Activated CD8-positive, alpha-beta memory T cell treated with anti-CD3 and anti-CD28 coated beads, Interleukin-2, amount 10 ng/mL, durations not matched to agents 7 days and 5 days (primary cell): ENCODE measurements at regions of chr15 and their contacts with region 1.

Region 1: GRCh38 chr15:48861813-48862431 is 16.0 kb upstream of the EID1 start:
- DNase-seq: peak; percentile 58
- ATAC-seq: peak; percentile 62
- H3K4me3 Mint-ChIP-seq: no peak overlapping the region
- H3K27ac Mint-ChIP-seq: no peak overlapping the region
- H3K4me1 Mint-ChIP-seq: peaks cover 29% of the 10 kb centered on the region
- H3K27me3 Mint-ChIP-seq: peaks cover 9% of the 10 kb centered on the region

Region 2: GRCh38 chr15:48695088-48695826 is 166.7 kb before region 1 on chr15:
- CTCF ChIA-PET with region 1: no interaction called
- DNase-seq: no peak
- ATAC-seq: no peak
- H3K4me3 Mint-ChIP-seq: no peak overlapping the region
- H3K27ac Mint-ChIP-seq: no peak overlapping the region
- H3K4me1 Mint-ChIP-seq: no peaks in the 10 kb centered on the region
- H3K27me3 Mint-ChIP-seq: no peaks in the 10 kb centered on the region

Region 3: GRCh38 chr15:48877630-48878595 is 16.0 kb after region 1 on chr15 and contains the start of gene EID1:
- CTCF ChIA-PET with region 1: interaction called, 17 read pairs
- DNase-seq: peak; percentile 97
- ATAC-seq: peak; percentile 93
- H3K4me3 Mint-ChIP-seq: peak within 1 kb of the TSS; percentile 93
- H3K27ac Mint-ChIP-seq: peak within 1 kb of the TSS; percentile 97
- H3K4me1 Mint-ChIP-seq: peaks cover 66% of the 10 kb centered on the region
- H3K27me3 Mint-ChIP-seq: peaks cover 8% of the 10 kb centered on the region
- total RNA-seq, gene EID1: 100 to 133 TPM

Region 4: GRCh38 chr15:48963524-48964113 is 101.7 kb after region 1 on chr15 and contains the start of gene SHC4:
- CTCF ChIA-PET with region 1: interaction called, 86 read pairs
- DNase-seq: peak; percentile 46
- ATAC-seq: peak; percentile 59
- H3K4me3 Mint-ChIP-seq: peak within 1 kb of the TSS; percentile 81
- H3K27ac Mint-ChIP-seq: peak within 1 kb of the TSS; percentile 86
- H3K4me1 Mint-ChIP-seq: peaks cover 56% of the 10 kb centered on the region
- H3K27me3 Mint-ChIP-seq: peaks cover 12% of the 10 kb centered on the region
- total RNA-seq, gene SHC4: 3.0 to 9.8 TPM

Region 5: GRCh38 chr15:49145651-49146609 is 284.0 kb after region 1 on chr15:
- CTCF ChIA-PET with region 1: interaction called, 25 read pairs
- DNase-seq: peak; percentile 48
- ATAC-seq: peak; percentile 27
- H3K4me3 Mint-ChIP-seq: no peak overlapping the region
- H3K27ac Mint-ChIP-seq: no peak overlapping the region
- H3K4me1 Mint-ChIP-seq: peaks cover 29% of the 10 kb centered on the region
- H3K27me3 Mint-ChIP-seq: no peaks in the 10 kb centered on the region

Region 6: GRCh38 chr15:49421991-49422390 is 560.1 kb after region 1 on chr15:
- CTCF ChIA-PET with region 1: interaction called, 16 read pairs
- DNase-seq: no peak
- ATAC-seq: no peak
- H3K4me3 Mint-ChIP-seq: peak overlapping the region; percentile 29
- H3K27ac Mint-ChIP-seq: peak overlapping the region; percentile 67
- H3K4me1 Mint-ChIP-seq: peaks cover 4% of the 10 kb centered on the region
- H3K27me3 Mint-ChIP-seq: peaks cover 12% of the 10 kb centered on the region